Left ventricle myocardium inferior (tissue), 1 donor: ENCODE measurements at regions of chr3 and their contacts with region 1.

Region 1: GRCh38 chr3:113136071-113136470 is 75.3 kb upstream of the BOC start:
- DNase-seq: no peak
- H3K4me3 ChIP-seq: no peak overlapping the region
- H3K27ac ChIP-seq: no peak overlapping the region
- H3K4me1 ChIP-seq: no peaks in the 10 kb centered on the region
- H3K27me3 ChIP-seq: no peaks in the 10 kb centered on the region
- CTCF ChIP-seq: peak; percentile 70

Region 2: DNA sequence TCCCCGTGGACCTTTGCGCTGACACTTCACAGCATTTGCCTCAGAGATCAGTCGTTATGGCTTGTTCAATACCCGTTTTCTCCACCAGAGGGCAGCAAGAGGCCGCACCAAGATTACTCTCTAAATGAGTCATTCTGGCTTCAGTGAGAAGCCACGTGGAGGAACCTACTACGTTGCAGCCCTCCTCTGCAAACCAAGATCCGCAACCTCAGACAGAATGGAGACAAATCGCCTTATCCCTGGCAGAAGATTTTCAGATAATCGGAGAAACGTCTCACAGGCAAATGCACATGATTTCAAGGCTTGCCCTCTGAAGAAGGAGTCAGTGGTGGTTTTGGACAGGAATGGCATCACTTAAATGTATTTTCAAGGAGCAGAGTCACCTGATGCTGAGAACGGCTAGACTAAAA is 84.8 kb before region 1 on chr3:
- intact Hi-C with region 1: loop called (anchors 10 kb)
- DNase-seq: peak; percentile 70
- H3K4me3 ChIP-seq: no peak overlapping the region
- H3K27ac ChIP-seq: no peak overlapping the region
- H3K4me1 ChIP-seq: peaks cover 6% of the 10 kb centered on the region
- H3K27me3 ChIP-seq: no peaks in the 10 kb centered on the region
- CTCF ChIP-seq: peak; percentile 97

Region 3: DNA sequence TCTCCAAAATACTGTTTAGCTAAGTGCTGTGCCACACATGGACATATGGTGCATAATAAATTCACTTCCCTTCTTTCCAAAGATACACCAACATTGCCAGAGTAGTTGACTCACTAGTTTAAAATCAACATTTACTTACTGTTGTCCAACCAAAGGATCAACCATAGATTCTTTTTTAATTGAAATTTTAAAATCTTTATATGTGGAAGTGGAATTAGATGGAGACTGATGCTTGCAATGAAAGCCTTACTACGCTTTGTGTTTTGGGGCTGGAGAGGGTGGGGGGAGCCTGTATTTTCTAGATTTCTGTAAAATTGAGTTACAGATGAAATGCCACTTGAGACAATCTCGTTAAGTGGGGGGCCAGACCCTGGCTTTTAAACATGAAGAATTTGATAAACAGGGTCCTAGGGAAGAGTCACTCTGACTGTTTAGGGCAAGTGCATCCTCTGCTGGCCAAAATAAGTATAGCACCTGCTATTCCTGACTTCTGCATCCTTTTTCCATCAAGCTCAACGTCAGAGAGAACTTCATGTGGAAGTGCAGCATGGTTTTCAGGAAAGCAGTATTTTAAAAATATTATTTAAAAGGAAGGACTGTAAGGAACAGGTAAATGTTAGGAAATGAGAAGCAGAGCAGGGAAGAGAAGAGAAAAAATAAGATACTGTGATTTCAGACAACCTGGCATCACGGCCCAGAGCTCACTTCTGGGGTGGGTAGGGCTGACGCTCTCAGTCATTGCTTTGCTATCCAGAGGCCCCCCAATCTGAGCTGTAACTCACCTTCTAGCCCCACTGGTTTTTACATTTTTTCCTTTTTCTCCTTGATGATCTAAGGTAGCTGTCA is 152.0 kb after region 1 on chr3:
- intact Hi-C with region 1: loop called (anchors 2 kb)
- DNase-seq: no peak
- H3K4me3 ChIP-seq: no peak overlapping the region
- H3K27ac ChIP-seq: no peak overlapping the region
- H3K4me1 ChIP-seq: no peaks in the 10 kb centered on the region
- H3K27me3 ChIP-seq: no peaks in the 10 kb centered on the region
- CTCF ChIP-seq: peak; percentile 99